ENCODE measurements at regions of chr6 and their contacts with region 1.

Region 1: GRCh38 chr6:148464319-148465010 is 121.8 kb downstream of the SASH1 start:
- DNase-seq: peak; percentile 69
- ATAC-seq: peak; percentile 67
- H3K4me3 Mint-ChIP-seq: no peak overlapping the region
- H3K27ac Mint-ChIP-seq: no peak overlapping the region
- H3K4me1 Mint-ChIP-seq: no peaks in the 10 kb centered on the region
- H3K27me3 Mint-ChIP-seq: peaks cover 8% of the 10 kb centered on the region
- CTCF ChIP-seq: peak; percentile 93

Region 2: DNA sequence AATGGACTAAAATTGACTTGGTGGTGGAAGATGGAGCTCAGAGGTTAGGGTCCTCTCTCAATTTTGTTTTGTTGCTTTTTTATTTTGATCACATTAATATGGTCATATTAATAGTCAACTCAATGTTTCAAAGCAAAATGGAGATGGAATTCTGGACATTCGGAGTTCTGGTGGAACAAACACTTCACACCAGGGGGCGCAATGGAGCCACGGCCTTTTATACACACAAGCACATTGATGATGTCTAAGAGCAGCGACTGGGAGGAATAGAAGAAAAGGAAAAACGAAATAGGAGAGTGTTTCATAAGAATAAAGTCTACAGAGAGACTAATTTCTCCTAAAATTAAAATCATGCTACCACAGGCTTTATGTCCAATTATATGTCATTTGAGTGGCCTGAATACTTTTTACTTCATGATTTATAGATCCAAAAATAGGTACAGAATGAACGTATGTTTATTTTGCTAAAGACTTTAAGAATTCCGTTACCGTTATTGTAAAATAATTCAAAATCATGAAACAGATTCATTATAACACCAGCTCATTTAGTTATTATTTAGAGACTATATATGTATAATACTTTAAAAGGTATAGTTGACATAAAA is 319.4 kb before region 1 on chr6:
- CTCF ChIA-PET with region 1: interaction called, 4 read pairs
- POLR2A ChIA-PET with region 1: no interaction called
- intact Hi-C with region 1: loop called (anchors 1 kb)
- DNase-seq: peak; percentile 82
- ATAC-seq: no peak
- H3K4me3 Mint-ChIP-seq: no peak overlapping the region
- H3K27ac Mint-ChIP-seq: no peak overlapping the region
- H3K4me1 Mint-ChIP-seq: peaks cover 11% of the 10 kb centered on the region
- H3K27me3 Mint-ChIP-seq: peaks cover 1% of the 10 kb centered on the region
- CTCF ChIP-seq: peak; percentile 89

Region 3: DNA sequence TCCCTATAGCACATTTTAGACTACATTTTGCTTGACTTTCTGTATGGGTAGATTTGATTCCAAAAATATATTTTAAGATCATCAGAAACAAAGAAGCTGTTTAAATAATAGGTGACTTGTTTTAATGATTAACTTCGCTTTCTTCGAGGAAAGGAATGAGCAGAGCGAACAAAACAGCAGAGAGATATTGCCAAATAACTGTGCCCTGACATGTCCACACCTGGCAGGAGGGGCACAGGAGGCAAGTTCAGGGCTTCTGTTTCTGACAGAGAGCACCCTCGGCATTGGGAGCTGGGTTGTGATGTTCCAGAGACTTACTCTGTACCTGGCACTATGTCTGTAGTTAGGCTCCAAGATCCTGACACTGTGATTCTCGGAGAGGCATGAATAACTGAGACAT is 277.5 kb before region 1 on chr6:
- CTCF ChIA-PET with region 1: no interaction called
- POLR2A ChIA-PET with region 1: no interaction called
- intact Hi-C with region 1: loop called (anchors 5 kb)
- DNase-seq: no peak
- ATAC-seq: no peak
- H3K4me3 Mint-ChIP-seq: no peak overlapping the region
- H3K27ac Mint-ChIP-seq: no peak overlapping the region
- H3K4me1 Mint-ChIP-seq: no peaks in the 10 kb centered on the region
- H3K27me3 Mint-ChIP-seq: peaks cover 28% of the 10 kb centered on the region
- CTCF ChIP-seq: no peak

Region 4: GRCh38 chr6:148414836-148415235 is 49.6 kb before region 1 on chr6:
- CTCF ChIA-PET with region 1: no interaction called
- POLR2A ChIA-PET with region 1: no interaction called
- intact Hi-C with region 1: no loop called
- DNase-seq: no peak
- ATAC-seq: no peak
- H3K4me3 Mint-ChIP-seq: no peak overlapping the region
- H3K27ac Mint-ChIP-seq: no peak overlapping the region
- H3K4me1 Mint-ChIP-seq: no peaks in the 10 kb centered on the region
- H3K27me3 Mint-ChIP-seq: peaks cover 6% of the 10 kb centered on the region
- CTCF ChIP-seq: no peak

Region 5: GRCh38 chr6:148635070-148635743 is 170.7 kb after region 1 on chr6:
- CTCF ChIA-PET with region 1: no interaction called
- POLR2A ChIA-PET with region 1: no interaction called
- intact Hi-C with region 1: no loop called
- DNase-seq: no peak
- ATAC-seq: no peak
- H3K4me3 Mint-ChIP-seq: no peak overlapping the region
- H3K27ac Mint-ChIP-seq: no peak overlapping the region
- H3K4me1 Mint-ChIP-seq: peaks cover 9% of the 10 kb centered on the region
- H3K27me3 Mint-ChIP-seq: no peaks in the 10 kb centered on the region
- CTCF ChIP-seq: no peak

Measured in activated CD8-positive, alpha-beta T cell treated with anti-CD3 and anti-CD28 coated beads for 36 hours (primary cell).